Lower leg skin (tissue), 4 donors: ENCODE measurements at regions of chr9 and their contacts with region 1.

Region 1: GRCh38 chr9:36400332-36401163 is 479 bp upstream of the RNF38 start:
- DNase-seq: peak; percentile 81 to 97
- H3K4me3 ChIP-seq: peak overlapping the region; percentile 64
- CTCF ChIP-seq: no peak
- POLR2A ChIP-seq: no peak

Region 2: DNA sequence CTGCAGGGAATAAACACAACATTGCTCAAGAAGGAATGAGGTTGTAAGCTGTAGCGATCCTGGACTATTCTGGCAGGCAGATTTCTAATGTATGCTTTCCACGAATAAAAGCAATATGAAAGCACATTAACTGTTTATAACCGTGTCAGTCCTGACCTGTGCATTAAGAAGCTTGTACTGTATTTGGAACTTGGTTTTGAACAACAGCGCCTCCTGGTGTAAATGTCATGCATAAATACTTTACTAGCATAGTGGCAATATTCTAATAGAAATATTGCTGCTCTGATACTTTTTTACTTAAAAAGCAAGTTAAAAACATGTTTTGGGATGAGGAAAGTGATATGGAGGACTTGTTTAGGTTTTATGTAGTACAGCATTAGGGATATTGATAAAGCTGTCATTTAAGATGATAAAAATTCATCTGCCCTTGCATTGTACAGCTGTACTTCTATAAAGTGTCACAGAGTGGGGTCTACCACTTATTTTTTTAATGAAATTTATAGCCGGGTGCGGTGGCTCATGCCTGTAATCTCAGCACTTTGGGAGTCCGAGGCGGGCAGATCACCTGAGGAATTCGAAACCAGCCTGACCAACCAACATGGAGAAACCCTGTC is 71.6 kb before region 1 on chr9:
- intact Hi-C with region 1: no loop called
- DNase-seq: peak in 1 of 2 donors; percentile 43
- H3K4me3 ChIP-seq: no peak overlapping the region
- CTCF ChIP-seq: no peak
- POLR2A ChIP-seq: no peak

Region 3: GRCh38 chr9:36450110-36450732 is 49.7 kb after region 1 on chr9:
- intact Hi-C with region 1: loop called (anchors 10 kb)
- DNase-seq: no peak
- H3K4me3 ChIP-seq: no peak overlapping the region
- CTCF ChIP-seq: peak in 1 of 3 donors; percentile 47
- POLR2A ChIP-seq: no peak

Region 4: GRCh38 chr9:36566813-36567221 is 166.3 kb after region 1 on chr9:
- intact Hi-C with region 1: no loop called
- DNase-seq: peak; percentile 48 to 90
- H3K4me3 ChIP-seq: no peak overlapping the region
- CTCF ChIP-seq: no peak
- POLR2A ChIP-seq: no peak